ENCODE measurements at regions of chr14 and their contacts with region 1.

Region 1: DNA sequence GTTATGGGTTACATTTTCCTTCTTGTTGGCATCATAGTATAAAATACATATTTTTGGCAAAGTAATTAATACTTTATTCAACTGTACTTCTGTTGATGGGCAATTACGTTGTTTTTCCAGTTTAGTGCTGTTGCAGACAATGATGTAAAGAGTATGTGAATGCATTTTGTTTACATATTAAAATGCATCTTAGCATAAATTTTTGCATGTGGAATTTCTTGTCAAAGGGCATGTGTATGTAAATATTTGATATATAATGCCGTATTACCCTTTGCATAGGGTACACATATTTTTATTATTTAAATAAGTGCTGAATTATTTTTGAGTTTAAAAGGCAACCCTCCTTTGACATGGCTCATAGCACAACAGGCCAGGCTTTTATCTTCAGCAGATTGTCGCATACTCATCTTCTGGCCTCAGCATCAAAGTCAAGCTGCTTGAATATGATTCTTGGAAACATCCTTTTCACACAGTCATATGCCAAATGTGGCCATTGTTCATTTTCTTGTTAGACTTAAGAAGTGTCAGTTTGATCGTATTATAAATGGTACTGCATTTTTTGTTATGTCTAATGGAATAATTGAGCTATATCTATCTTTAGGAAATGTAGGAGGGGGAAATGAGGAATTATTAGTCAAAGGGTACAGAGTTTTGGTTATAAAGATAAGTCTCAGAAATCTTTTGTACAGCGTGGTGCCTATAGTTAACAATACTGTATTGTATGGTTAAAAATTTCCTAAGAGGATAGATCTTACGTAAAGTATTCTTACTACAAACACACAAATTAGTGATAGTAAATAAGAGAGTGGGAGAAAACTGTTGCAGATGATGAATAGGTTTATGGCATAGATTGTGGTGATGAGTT is 138.5 kb downstream of the FUT8 start:
- DNase-seq: no peak
- H3K4me3 Mint-ChIP-seq: no peak overlapping the region
- H3K27ac Mint-ChIP-seq: peak overlapping the region; percentile 0
- H3K4me1 Mint-ChIP-seq: peaks cover 14% of the 10 kb centered on the region
- H3K27me3 Mint-ChIP-seq: no peaks in the 10 kb centered on the region

Region 2: DNA sequence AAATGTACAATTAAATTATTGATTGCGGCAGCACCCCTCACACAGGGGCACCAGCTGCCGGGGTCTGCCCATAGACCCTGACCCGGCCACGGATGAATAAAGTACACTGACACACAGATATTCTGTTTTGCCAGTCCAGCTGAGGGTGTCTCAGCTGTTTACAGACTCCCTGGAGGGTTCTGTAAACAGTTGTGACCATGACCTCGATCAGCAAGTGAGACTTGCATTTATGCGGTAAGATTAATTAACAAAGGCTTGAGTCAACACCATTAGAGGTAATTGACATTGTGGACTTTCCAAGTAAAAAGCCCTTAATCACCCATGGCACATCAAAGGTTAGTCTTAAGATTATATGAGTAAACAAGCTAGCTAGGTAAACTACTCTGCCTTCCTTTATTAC is 44.2 kb before region 1 on chr14:
- intact Hi-C with region 1: loop called (anchors 5 kb)
- DNase-seq: no peak
- H3K4me3 Mint-ChIP-seq: no peak overlapping the region
- H3K27ac Mint-ChIP-seq: no peak overlapping the region
- H3K4me1 Mint-ChIP-seq: peaks cover 58% of the 10 kb centered on the region
- H3K27me3 Mint-ChIP-seq: no peaks in the 10 kb centered on the region

Region 3: GRCh38 chr14:65565948-65566347 is 14.9 kb after region 1 on chr14:
- intact Hi-C with region 1: loop called (anchors 2 kb)
- DNase-seq: no peak
- H3K4me3 Mint-ChIP-seq: no peak overlapping the region
- H3K27ac Mint-ChIP-seq: peak overlapping the region; percentile 84
- H3K4me1 Mint-ChIP-seq: peaks cover 57% of the 10 kb centered on the region
- H3K27me3 Mint-ChIP-seq: no peaks in the 10 kb centered on the region

Measured in activated T-helper 1 cell treated with anti-CD3 and anti-CD28 coated beads, Interleukin-12 subunit alpha, Interleukin-12 subunit beta, Interleukin-2, Interleukin-4 antibody, amounts not matched to agents 30 ng/mL and 10 ng/mL and 1 ng/mL, durations not matched to agents 14 hours and 24 hours and 36 hours (primary cell).